B cell (primary cell): ENCODE measurements at regions of chr12 and their contacts with region 1.

Region 1: GRCh38 chr12:53054112-53054833 is 4.4 kb downstream of the TNS2 start:
- DNase-seq: peak; percentile 97
- ATAC-seq: peak; percentile 97
- H3K4me3 ChIP-seq: peak overlapping the region; percentile 36 to 87 (median 75)
- H3K4me3 Mint-ChIP-seq: peak overlapping the region; percentile 98
- H3K27ac ChIP-seq: peak overlapping the region; percentile 52 to 65
- H3K27ac Mint-ChIP-seq: peak overlapping the region; percentile 91
- H3K4me1 ChIP-seq: peaks cover 6 to 15% of the 10 kb centered on the region in 2 donors
- H3K4me1 Mint-ChIP-seq: peaks cover 14% of the 10 kb centered on the region
- H3K27me3 ChIP-seq: peaks cover 0 to 7% (median 0%) of the 10 kb centered on the region in 4 experiments
- H3K27me3 Mint-ChIP-seq: no peaks in the 10 kb centered on the region
- CTCF ChIP-seq: no peak

Region 2: DNA sequence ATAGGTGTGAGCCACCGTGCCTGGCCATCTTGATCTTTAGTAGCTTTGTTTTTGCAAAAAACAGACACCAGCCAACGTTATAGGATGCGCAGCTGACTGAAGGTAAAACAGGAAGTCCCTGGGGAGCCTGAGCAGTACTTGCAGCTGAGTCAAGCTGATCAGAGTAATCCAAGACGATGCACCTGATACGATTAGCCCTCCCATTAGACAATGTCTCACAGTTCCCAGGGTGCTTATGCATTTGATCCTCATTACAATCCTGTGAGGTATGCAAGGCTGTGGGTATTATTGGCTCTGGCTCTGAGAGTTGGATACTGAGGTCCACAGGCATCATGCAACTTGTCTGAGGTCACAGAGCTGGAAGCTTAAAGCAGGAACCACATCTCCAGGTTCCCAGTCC is 97.3 kb before region 1 on chr12:
- CTCF ChIA-PET with region 1: no interaction called
- POLR2A ChIA-PET with region 1: no interaction called
- intact Hi-C with region 1: no loop called
- DNase-seq: no peak
- ATAC-seq: no peak
- H3K4me3 ChIP-seq: no peak overlapping the region
- H3K4me3 Mint-ChIP-seq: no peak overlapping the region
- H3K27ac ChIP-seq: no peak overlapping the region
- H3K27ac Mint-ChIP-seq: no peak overlapping the region
- H3K4me1 ChIP-seq: no peaks in the 10 kb centered on the region
- H3K4me1 Mint-ChIP-seq: no peaks in the 10 kb centered on the region
- H3K27me3 ChIP-seq: no peaks in the 10 kb centered on the region
- H3K27me3 Mint-ChIP-seq: peaks cover 9% of the 10 kb centered on the region
- CTCF ChIP-seq: no peak

Region 3: DNA sequence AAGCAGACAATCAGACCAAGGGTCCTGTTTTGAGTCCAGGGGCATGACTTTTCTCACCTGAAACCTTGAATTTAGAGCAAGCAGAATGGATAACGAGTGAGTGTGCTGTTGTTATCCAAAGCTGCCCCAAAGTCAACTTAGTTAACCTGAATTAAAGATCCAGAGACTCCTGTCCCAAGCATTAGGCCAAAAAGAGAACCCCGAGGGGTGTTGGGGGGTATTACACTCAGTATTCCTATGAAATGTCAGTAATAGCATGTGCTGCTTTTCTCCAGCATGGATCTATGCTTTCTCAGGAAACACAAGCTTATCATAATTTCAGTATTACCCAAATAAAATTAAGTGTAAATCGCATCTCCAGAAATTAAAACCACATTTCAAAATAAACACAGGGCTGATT is 29.0 kb before region 1 on chr12:
- CTCF ChIA-PET with region 1: no interaction called
- POLR2A ChIA-PET with region 1: no interaction called
- intact Hi-C with region 1: no loop called
- DNase-seq: no peak
- ATAC-seq: no peak
- H3K4me3 ChIP-seq: no peak overlapping the region
- H3K4me3 Mint-ChIP-seq: no peak overlapping the region
- H3K27ac ChIP-seq: no peak overlapping the region
- H3K27ac Mint-ChIP-seq: no peak overlapping the region
- H3K4me1 ChIP-seq: no peaks in the 10 kb centered on the region
- H3K4me1 Mint-ChIP-seq: no peaks in the 10 kb centered on the region
- H3K27me3 ChIP-seq: no peaks in the 10 kb centered on the region
- H3K27me3 Mint-ChIP-seq: no peaks in the 10 kb centered on the region
- CTCF ChIP-seq: no peak

Region 4: GRCh38 chr12:53079226-53080117 is 25.2 kb after region 1 on chr12 and contains the start of gene SPRYD3:
- CTCF ChIA-PET with region 1: interaction called, 7 read pairs
- POLR2A ChIA-PET with region 1: interaction called, 10 read pairs
- intact Hi-C with region 1: loop called (anchors 1 kb)
- DNase-seq: peak; percentile 97
- ATAC-seq: peak; percentile 98
- H3K4me3 ChIP-seq: peak within 1 kb of the TSS; percentile 65 to 98 (median 80)
- H3K4me3 Mint-ChIP-seq: peak within 1 kb of the TSS; percentile 95
- H3K27ac ChIP-seq: peak within 1 kb of the TSS; percentile 51 to 75
- H3K27ac Mint-ChIP-seq: peak within 1 kb of the TSS; percentile 95
- H3K4me1 ChIP-seq: peaks cover 10 to 17% of the 10 kb centered on the region in 2 donors
- H3K4me1 Mint-ChIP-seq: peaks cover 28% of the 10 kb centered on the region
- H3K27me3 ChIP-seq: peaks cover 0 to 8% (median 0%) of the 10 kb centered on the region in 4 experiments
- H3K27me3 Mint-ChIP-seq: peaks cover 4% of the 10 kb centered on the region
- CTCF ChIP-seq: no peak
- total RNA-seq, gene SPRYD3: 39.8 and 43.3 TPM in 2 replicates

Region 5: GRCh38 chr12:53098982-53099651 is 44.8 kb after region 1 on chr12:
- CTCF ChIA-PET with region 1: interaction called, 6 read pairs
- POLR2A ChIA-PET with region 1: interaction called, 4 read pairs
- intact Hi-C with region 1: loop called (anchors 5 kb)
- DNase-seq: peak; percentile 87
- ATAC-seq: peak; percentile 68
- H3K4me3 ChIP-seq: no peak overlapping the region
- H3K4me3 Mint-ChIP-seq: peak overlapping the region; percentile 90
- H3K27ac ChIP-seq: no peak overlapping the region
- H3K27ac Mint-ChIP-seq: peak overlapping the region; percentile 59
- H3K4me1 ChIP-seq: peaks cover 37 to 46% of the 10 kb centered on the region in 2 donors
- H3K4me1 Mint-ChIP-seq: peaks cover 42% of the 10 kb centered on the region
- H3K27me3 ChIP-seq: peaks cover 0 to 18% (median 7%) of the 10 kb centered on the region in 4 experiments
- H3K27me3 Mint-ChIP-seq: peaks cover 14% of the 10 kb centered on the region
- CTCF ChIP-seq: peak; percentile 97

Region 6: DNA sequence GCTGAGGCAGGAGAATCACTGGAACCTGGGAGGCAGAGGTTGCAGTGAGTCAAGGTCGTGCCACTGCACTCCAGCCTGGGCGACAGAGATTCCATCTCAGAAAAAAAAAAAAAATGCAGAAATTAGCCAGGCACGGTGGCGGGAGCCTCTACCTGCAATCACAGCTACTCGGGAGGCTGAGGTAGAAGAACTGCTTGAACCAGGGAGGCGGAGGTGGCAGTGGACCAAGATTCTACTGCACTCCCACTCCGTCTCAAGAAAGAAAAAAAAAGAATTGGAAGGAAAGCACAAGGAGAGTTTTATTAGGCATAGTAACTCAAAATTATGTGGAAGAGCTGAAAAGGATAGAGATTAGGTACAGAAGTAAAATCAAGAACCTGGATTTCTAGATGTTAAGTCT is 348.6 kb after region 1 on chr12:
- CTCF ChIA-PET with region 1: no interaction called
- POLR2A ChIA-PET with region 1: no interaction called
- intact Hi-C with region 1: no loop called
- DNase-seq: no peak
- ATAC-seq: no peak
- H3K4me3 ChIP-seq: no peak overlapping the region
- H3K4me3 Mint-ChIP-seq: no peak overlapping the region
- H3K27ac ChIP-seq: no peak overlapping the region
- H3K27ac Mint-ChIP-seq: no peak overlapping the region
- H3K4me1 ChIP-seq: no peaks in the 10 kb centered on the region
- H3K4me1 Mint-ChIP-seq: peaks cover 3% of the 10 kb centered on the region
- H3K27me3 ChIP-seq: no peaks in the 10 kb centered on the region
- H3K27me3 Mint-ChIP-seq: no peaks in the 10 kb centered on the region
- CTCF ChIP-seq: no peak

Region 7: DNA sequence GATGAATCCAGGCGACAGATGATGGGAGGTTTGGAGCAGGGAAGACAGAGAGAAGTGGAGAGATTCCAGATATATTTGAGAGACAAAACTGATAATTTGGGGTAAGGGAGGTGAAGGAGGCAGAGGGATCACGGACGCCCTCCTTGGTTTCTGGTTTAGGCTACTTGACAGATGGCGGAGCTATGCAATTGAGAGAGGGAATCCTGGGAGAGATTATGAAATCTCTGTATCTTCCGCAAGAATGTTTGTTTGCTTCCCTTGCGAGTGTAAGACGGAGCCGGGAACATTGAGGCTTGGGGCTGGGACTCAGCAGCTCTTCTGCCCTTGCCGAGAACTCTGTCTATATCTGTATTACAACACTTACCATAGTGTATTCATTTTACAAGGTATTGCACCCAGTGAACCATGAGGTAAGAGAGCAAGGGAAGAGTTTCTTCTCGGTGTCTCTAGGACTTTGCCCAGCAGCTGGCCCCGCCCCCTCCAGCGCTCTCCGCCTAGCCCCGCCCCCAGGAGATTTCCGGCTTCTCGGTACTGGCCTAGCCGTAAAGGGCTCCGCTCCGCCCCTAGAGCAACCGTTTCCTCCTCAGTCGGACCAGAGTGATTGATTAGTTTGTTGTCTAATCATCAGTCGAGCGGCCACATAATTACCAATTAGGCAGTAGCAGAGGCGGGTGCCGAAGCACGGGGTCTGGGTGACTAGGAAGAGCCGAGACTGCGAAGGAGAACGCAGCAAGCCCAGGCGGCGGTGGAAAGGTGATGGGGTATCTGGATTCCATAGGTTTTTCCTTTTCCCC is 387.0 kb after region 1 on chr12 and contains the start of gene PRR13:
- CTCF ChIA-PET with region 1: no interaction called
- POLR2A ChIA-PET with region 1: no interaction called
- intact Hi-C with region 1: loop called (anchors 5 kb)
- DNase-seq: peak; percentile 98
- ATAC-seq: peak; percentile 97
- H3K4me3 ChIP-seq: peak within 1 kb of the TSS; percentile 85 to 99 (median 94)
- H3K4me3 Mint-ChIP-seq: peak within 1 kb of the TSS; percentile 97
- H3K27ac ChIP-seq: peak within 1 kb of the TSS; percentile 62 to 93
- H3K27ac Mint-ChIP-seq: peak within 1 kb of the TSS; percentile 99
- H3K4me1 ChIP-seq: peaks cover 21 to 25% of the 10 kb centered on the region in 2 donors
- H3K4me1 Mint-ChIP-seq: peaks cover 40% of the 10 kb centered on the region
- H3K27me3 ChIP-seq: no peaks in the 10 kb centered on the region
- H3K27me3 Mint-ChIP-seq: no peaks in the 10 kb centered on the region
- CTCF ChIP-seq: no peak
- total RNA-seq, gene PRR13: 200 and 213 TPM in 2 replicates